Activated CD4-positive, alpha-beta T cell treated with anti-CD3 and anti-CD28 coated beads for 36 hours (primary cell): ENCODE measurements at regions of chr4 and their contacts with region 1.

Region 1: DNA sequence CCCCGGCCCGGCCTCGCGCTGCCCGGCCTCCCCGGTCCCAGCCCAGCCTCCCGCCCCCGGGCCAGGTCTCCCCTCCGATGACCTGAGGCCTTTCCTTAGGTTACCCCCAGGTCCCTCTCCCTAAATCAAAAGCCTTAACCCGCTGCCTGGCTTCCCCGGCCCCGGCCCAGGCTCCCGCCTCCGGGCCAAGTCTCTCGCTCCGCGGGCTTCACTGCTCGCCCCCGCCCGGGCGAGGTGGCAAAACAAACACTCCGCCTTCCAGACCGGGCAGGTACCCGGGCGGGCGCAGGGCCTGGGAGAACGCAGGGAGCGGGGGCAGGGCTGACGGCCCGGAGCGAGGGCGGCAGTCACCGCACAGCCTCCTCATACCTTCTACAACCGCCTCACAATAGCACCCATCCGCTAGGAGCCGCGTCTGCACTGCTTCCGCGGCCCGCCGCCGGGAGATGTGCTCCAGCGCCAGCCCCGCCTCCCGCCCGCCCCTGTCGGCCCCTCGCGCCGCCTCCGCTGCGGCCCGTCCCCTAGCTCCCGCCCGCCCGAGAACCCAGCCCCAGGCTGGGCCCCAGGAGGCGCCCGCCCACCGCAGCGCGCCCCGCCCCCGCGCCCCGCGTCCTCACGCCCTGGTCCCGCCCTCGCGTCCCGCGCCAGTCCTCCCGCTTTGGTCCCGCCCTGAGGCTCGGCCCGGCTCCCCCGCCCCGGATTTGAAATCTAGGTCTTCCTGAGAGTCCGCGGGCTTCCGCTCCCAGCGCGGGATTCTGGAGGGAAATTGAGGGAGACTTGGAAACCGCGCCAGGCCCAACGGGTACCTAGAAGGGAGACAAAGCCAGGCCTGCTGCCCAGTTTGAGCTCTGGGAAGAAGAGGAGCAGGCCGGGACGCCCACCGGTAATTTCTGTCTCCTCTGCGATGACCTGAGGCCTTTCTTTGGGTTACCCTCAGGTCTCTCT is at the starts of genes CASP3 and PRIMPOL:
- DNase-seq: peak; percentile 98
- ATAC-seq: peak; percentile 88
- H3K4me3 Mint-ChIP-seq: peak within 1 kb of the TSS; percentile 94
- H3K27ac Mint-ChIP-seq: peak within 1 kb of the TSS; percentile 95
- H3K4me1 Mint-ChIP-seq: peaks cover 51% of the 10 kb centered on the region
- H3K27me3 Mint-ChIP-seq: no peaks in the 10 kb centered on the region
- total RNA-seq, gene CASP3: 44.3 to 65.7 TPM
- total RNA-seq, gene PRIMPOL: 20.4 to 24.3 TPM

Region 2: GRCh38 chr4:183444214-183445066 is 1204.9 kb before region 1 on chr4 and contains the start of gene CDKN2AIP:
- CTCF ChIA-PET with region 1: no interaction called
- POLR2A ChIA-PET with region 1: no interaction called
- intact Hi-C with region 1: loop called in 1 of 2 experiments (anchors 1 kb)
- DNase-seq: peak; percentile 95
- ATAC-seq: peak; percentile 87
- H3K4me3 Mint-ChIP-seq: peak within 1 kb of the TSS; percentile 97
- H3K27ac Mint-ChIP-seq: peak within 1 kb of the TSS; percentile 97
- H3K4me1 Mint-ChIP-seq: peaks cover 42% of the 10 kb centered on the region
- H3K27me3 Mint-ChIP-seq: no peaks in the 10 kb centered on the region
- total RNA-seq, gene CDKN2AIP: 19.4 to 22.8 TPM

Region 3: GRCh38 chr4:184466634-184467033 is 182.7 kb before region 1 on chr4:
- CTCF ChIA-PET with region 1: no interaction called
- POLR2A ChIA-PET with region 1: no interaction called
- intact Hi-C with region 1: no loop called
- DNase-seq: no peak
- ATAC-seq: peak; percentile 57
- H3K4me3 Mint-ChIP-seq: no peak overlapping the region
- H3K27ac Mint-ChIP-seq: no peak overlapping the region
- H3K4me1 Mint-ChIP-seq: peaks cover 68% of the 10 kb centered on the region
- H3K27me3 Mint-ChIP-seq: no peaks in the 10 kb centered on the region

Region 4: DNA sequence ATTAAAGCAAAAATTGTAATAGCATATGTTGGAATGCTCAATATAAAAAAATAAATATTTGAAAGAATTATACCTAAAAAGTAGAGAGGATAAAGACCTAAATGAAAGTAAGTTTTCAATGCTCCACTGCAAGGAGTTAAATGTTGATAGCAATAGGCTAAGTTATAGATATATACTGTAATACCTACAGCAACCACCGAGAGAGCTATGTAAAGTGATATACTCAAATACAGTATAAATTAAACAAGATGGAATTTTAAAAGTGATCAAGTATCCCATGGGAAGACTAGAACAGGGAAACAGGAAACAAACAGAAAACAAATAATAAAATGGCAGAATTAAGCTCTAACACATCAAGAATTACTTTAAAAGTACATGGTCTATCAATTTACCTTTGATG is 74.0 kb before region 1 on chr4:
- CTCF ChIA-PET with region 1: no interaction called
- POLR2A ChIA-PET with region 1: no interaction called
- intact Hi-C with region 1: loop called (anchors 1 to 5 kb)
- DNase-seq: no peak
- ATAC-seq: peak; percentile 67
- H3K4me3 Mint-ChIP-seq: no peak overlapping the region
- H3K27ac Mint-ChIP-seq: peak overlapping the region; percentile 47
- H3K4me1 Mint-ChIP-seq: peaks cover 22% of the 10 kb centered on the region
- H3K27me3 Mint-ChIP-seq: no peaks in the 10 kb centered on the region

Region 5: DNA sequence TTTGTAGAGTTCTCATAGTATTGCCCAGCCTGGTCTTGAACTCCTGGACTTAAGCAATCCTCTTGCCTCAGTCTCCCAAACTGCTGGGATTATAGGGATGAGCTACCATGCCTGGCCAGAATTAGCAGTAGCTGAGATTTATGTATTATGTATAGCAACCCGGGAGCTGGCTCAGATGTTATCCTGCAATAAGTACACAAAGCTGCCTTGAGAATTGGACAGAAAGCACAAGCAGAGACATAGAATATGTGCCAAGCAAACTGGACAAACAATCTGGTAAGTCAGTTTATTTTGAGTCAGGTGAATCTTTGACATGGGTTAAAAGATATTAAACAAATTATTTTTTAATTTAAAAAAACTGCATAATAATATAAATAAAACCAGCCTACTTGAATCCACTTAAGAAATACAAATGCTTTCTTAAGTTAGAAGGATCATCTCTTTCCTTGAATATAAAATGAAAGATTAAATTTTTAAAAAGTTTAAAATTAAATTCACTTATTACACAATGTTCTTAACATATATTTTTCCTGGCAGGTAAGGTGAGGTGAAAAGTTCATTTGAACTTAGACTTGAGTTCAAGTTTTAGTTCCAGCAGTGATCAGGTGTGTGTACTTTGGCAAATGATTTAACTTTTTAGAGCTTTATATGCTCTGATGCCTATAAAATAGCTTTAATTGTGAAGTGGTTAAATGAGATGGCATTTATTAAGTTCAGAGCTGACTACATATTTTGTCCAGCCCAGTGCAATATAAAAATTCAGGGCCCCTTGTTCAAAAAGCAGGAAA is 264.3 kb after region 1 on chr4:
- CTCF ChIA-PET with region 1: no interaction called
- POLR2A ChIA-PET with region 1: no interaction called
- intact Hi-C with region 1: no loop called
- DNase-seq: no peak
- ATAC-seq: no peak
- H3K4me3 Mint-ChIP-seq: no peak overlapping the region
- H3K27ac Mint-ChIP-seq: no peak overlapping the region
- H3K4me1 Mint-ChIP-seq: peaks cover 3% of the 10 kb centered on the region
- H3K27me3 Mint-ChIP-seq: peaks cover 3% of the 10 kb centered on the region

Region 6: GRCh38 chr4:185203486-185204237 is 554.4 kb after region 1 on chr4 and contains the start of gene CFAP97:
- CTCF ChIA-PET with region 1: no interaction called
- POLR2A ChIA-PET with region 1: no interaction called
- intact Hi-C with region 1: loop called in 1 of 2 experiments (anchors 5 kb)
- DNase-seq: peak; percentile 82
- ATAC-seq: peak; percentile 85
- H3K4me3 Mint-ChIP-seq: peak within 1 kb of the TSS; percentile 94
- H3K27ac Mint-ChIP-seq: peak within 1 kb of the TSS; percentile 97
- H3K4me1 Mint-ChIP-seq: peaks cover 41% of the 10 kb centered on the region
- H3K27me3 Mint-ChIP-seq: no peaks in the 10 kb centered on the region
- total RNA-seq, gene CFAP97: 54.6 to 81.8 TPM